HCT116 (cell line): ENCODE measurements at regions of chr7 and their contacts with region 1.

Region 1: GRCh38 chr7:25389489-25390106 is 161.3 kb upstream of the NPVF start:
- DNase-seq: peak; percentile 31
- ATAC-seq: peak; percentile 59
- H3K4me3 ChIP-seq: no peak overlapping the region
- H3K27ac ChIP-seq: no peak overlapping the region
- H3K4me1 ChIP-seq: no peaks in the 10 kb centered on the region
- H3K27me3 ChIP-seq: peaks cover 27% of the 10 kb centered on the region
- CTCF ChIP-seq: peak; percentile 27 to 47 (median 45); a peak in 4 of 6 replicates
- POLR2A ChIP-seq: no peak
- RAD21 ChIP-seq: peak; percentile 58

Region 2: DNA sequence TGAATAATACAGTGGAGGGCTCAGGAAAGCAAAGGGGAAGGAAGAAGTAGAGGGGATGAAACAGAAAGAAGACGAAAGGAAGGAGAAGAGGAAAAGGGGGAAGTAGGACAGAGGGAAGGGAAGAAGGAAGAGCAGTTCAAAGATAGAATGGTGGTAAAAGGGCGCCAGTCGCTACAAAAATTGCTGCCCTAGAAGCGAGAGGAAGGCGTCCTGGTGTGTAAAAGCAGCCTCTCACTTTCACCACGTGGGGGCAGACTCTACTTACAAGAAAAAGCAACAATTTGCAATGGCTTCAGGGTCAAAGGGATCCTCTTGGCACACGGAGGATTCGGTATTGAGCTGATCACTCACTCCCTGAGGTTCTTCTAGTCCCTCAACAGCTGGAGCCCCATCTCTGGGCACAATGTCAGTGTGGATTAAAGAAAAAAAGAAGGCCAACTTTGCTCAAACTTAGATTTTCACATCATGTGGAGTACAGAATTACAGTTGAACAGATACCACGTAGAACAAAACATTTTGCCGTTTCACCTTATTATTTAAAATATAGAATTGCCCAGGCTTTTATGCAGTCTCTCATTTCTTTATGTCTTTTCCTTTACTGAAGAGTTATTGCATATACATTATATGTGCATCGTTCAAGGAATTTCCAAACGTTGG is 129.9 kb before region 1 on chr7:
- CTCF ChIA-PET with region 1: interaction called, 41 read pairs
- POLR2A ChIA-PET with region 1: no interaction called
- RAD21 ChIA-PET with region 1: interaction called in 1 of 2 experiments, 5 read pairs
- intact Hi-C with region 1: loop called (anchors 1 kb)
- DNase-seq: peak; percentile 44
- ATAC-seq: peak; percentile 91
- H3K4me3 ChIP-seq: no peak overlapping the region
- H3K27ac ChIP-seq: no peak overlapping the region
- H3K4me1 ChIP-seq: peaks cover 0 to 8% of the 10 kb centered on the region in 2 experiments; a peak in 2 of 4 replicates
- H3K27me3 ChIP-seq: peaks cover 41% of the 10 kb centered on the region
- CTCF ChIP-seq: peak; percentile 73 to 91 (median 77)
- POLR2A ChIP-seq: no peak
- RAD21 ChIP-seq: peak; percentile 84

Region 3: GRCh38 chr7:26709210-26709990 is 1319.8 kb after region 1 on chr7:
- CTCF ChIA-PET with region 1: no interaction called
- POLR2A ChIA-PET with region 1: no interaction called
- RAD21 ChIA-PET with region 1: no interaction called
- intact Hi-C with region 1: no loop called
- DNase-seq: no peak
- ATAC-seq: no peak
- H3K4me3 ChIP-seq: no peak overlapping the region
- H3K27ac ChIP-seq: no peak overlapping the region
- H3K4me1 ChIP-seq: no peaks in the 10 kb centered on the region
- H3K27me3 ChIP-seq: no peaks in the 10 kb centered on the region
- CTCF ChIP-seq: no peak
- POLR2A ChIP-seq: no peak
- RAD21 ChIP-seq: no peak